ENCODE measurements at regions of chr12 and their contacts with region 1.

Region 1: GRCh38 chr12:108514973-108515814 is at the start of gene FICD:
- DNase-seq: peak; percentile 96
- H3K4me3 ChIP-seq: peak within 1 kb of the TSS; percentile 68 to 92
- H3K27ac ChIP-seq: peak within 1 kb of the TSS; percentile 40 to 41; a peak in 2 of 4 replicates
- H3K4me1 ChIP-seq: peaks cover 5 to 17% of the 10 kb centered on the region in 2 experiments; a peak in 1 of 4 replicates
- H3K27me3 ChIP-seq: no peaks in the 10 kb centered on the region
- CTCF ChIP-seq: no peak
- EP300 ChIP-seq: no peak
- RAD21 ChIP-seq: no peak
- polyA plus RNA-seq, gene FICD: 1.0 and 1.2 TPM in 2 replicates

Region 2: GRCh38 chr12:108129017-108129812 is 386.0 kb before region 1 on chr12 and contains the start of gene WSCD2:
- CTCF ChIA-PET with region 1: interaction called, 11 read pairs
- POLR2A ChIA-PET with region 1: no interaction called
- DNase-seq: peak; percentile 90
- H3K4me3 ChIP-seq: peak within 1 kb of the TSS in 1 of 2 experiments; percentile 48; a peak in 3 of 4 replicates
- H3K27ac ChIP-seq: peak within 1 kb of the TSS in 1 of 2 experiments; percentile 69; a peak in 2 of 4 replicates
- H3K4me1 ChIP-seq: peaks cover 0 to 26% of the 10 kb centered on the region in 2 experiments; a peak in 1 of 4 replicates
- H3K27me3 ChIP-seq: no peaks in the 10 kb centered on the region
- CTCF ChIP-seq: no peak
- EP300 ChIP-seq: no peak
- RAD21 ChIP-seq: peak; percentile 53
- polyA plus RNA-seq, gene WSCD2: 0.03 and 0.05 TPM in 2 replicates

Region 3: GRCh38 chr12:108234158-108234557 is 281.0 kb before region 1 on chr12:
- CTCF ChIA-PET with region 1: interaction called, 45 read pairs
- POLR2A ChIA-PET with region 1: no interaction called
- DNase-seq: peak; percentile 58
- H3K4me3 ChIP-seq: no peak overlapping the region
- H3K27ac ChIP-seq: no peak overlapping the region
- H3K4me1 ChIP-seq: peaks cover 0 to 22% of the 10 kb centered on the region in 2 experiments; a peak in 2 of 4 replicates
- H3K27me3 ChIP-seq: no peaks in the 10 kb centered on the region
- CTCF ChIP-seq: no peak
- EP300 ChIP-seq: no peak
- RAD21 ChIP-seq: peak; percentile 79

Region 4: DNA sequence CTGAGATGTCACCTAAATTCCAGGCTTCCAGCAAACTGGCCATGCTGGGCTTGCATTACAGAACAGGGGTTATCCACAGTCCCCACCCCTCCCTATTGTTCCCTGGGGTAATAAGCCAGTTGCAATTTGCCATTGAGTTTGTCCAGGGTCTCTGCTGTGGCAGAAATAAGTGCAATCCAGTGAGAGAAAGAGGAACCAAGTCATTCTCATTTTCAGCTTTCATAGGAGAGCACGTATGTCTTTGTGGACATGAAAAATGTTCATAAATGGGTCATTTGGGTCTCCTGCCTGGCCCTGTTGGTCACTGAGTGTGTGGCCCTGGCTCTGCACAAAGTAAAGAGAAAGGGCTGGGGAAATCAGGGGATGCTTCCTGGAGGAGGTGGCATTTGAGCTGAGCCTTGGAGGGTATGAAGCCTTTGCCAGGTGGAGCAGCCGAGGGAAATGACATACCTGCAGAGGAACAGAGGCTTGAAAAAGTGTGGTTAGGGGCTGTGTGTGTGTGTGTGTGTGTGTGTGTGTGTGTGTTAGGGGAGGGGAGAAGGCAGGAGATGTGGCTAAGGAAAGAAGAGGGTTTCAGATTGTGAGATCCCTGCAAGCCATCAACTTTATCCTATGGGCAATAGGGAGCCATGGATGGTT is 205.4 kb before region 1 on chr12:
- CTCF ChIA-PET with region 1: no interaction called
- POLR2A ChIA-PET with region 1: no interaction called
- DNase-seq: no peak
- H3K4me3 ChIP-seq: no peak overlapping the region
- H3K27ac ChIP-seq: peak overlapping the region in 1 of 2 experiments; percentile 97; a peak in 1 of 4 replicates
- H3K4me1 ChIP-seq: peaks cover 0 to 86% of the 10 kb centered on the region in 2 experiments; a peak in 2 of 4 replicates
- H3K27me3 ChIP-seq: no peaks in the 10 kb centered on the region
- CTCF ChIP-seq: no peak
- EP300 ChIP-seq: no peak
- RAD21 ChIP-seq: no peak

Region 5: DNA sequence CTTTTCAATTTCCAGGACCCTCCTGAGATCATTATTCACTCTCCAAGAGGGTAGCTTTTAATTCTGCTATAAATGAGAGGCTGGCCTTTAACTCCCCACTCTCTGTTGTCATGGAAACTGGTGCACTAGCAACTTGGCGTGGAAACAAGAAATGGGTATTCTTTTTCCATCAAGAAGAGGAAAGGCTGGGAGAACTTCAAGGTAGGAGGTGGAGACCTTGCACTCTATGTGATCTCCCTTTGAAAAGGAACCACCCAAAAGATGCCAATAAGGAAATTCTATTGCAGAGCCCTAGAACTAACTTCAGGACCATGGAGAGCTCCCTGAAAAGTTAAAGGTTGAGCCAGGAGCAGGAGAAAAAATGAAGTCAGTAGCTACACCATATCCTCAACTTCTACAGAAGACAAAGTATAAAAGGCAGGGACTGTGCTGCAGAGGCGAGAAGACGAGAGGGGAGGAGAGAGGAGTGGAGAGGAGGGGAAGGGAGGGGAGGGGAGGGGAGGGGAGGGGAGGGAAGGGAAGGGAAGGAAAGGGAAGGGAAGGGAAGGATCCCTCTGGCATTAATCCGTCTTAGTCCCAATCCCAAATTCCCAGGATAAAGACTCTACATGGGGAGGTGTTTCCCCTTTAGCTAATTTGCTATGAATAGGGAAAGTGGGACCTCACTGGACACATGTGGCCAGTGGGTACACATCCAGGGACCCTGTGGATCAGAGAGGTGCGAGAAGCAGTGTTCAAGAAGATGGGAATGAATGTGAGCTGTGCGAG is 46.8 kb before region 1 on chr12:
- CTCF ChIA-PET with region 1: interaction called, 13 read pairs
- POLR2A ChIA-PET with region 1: no interaction called
- DNase-seq: no peak
- H3K4me3 ChIP-seq: no peak overlapping the region
- H3K27ac ChIP-seq: no peak overlapping the region
- H3K4me1 ChIP-seq: peaks cover 0 to 2% of the 10 kb centered on the region in 2 experiments; a peak in 1 of 4 replicates
- H3K27me3 ChIP-seq: no peaks in the 10 kb centered on the region
- CTCF ChIP-seq: no peak
- EP300 ChIP-seq: no peak
- RAD21 ChIP-seq: no peak

Region 6: GRCh38 chr12:108495054-108495453 is 20.1 kb before region 1 on chr12:
- CTCF ChIA-PET with region 1: interaction called, 33 read pairs
- POLR2A ChIA-PET with region 1: no interaction called
- DNase-seq: peak; percentile 59
- H3K4me3 ChIP-seq: no peak overlapping the region; a peak in 1 of 4 replicates
- H3K27ac ChIP-seq: peak overlapping the region in 1 of 2 experiments; percentile 60; a peak in 1 of 4 replicates
- H3K4me1 ChIP-seq: peaks cover 0 to 14% of the 10 kb centered on the region in 2 experiments; a peak in 1 of 4 replicates
- H3K27me3 ChIP-seq: no peaks in the 10 kb centered on the region
- CTCF ChIP-seq: peak; percentile 65
- EP300 ChIP-seq: no peak
- RAD21 ChIP-seq: peak; percentile 62

Region 7: GRCh38 chr12:108664338-108665258 is 149.4 kb after region 1 on chr12:
- CTCF ChIA-PET with region 1: no interaction called
- POLR2A ChIA-PET with region 1: no interaction called
- DNase-seq: peak; percentile 78
- H3K4me3 ChIP-seq: no peak overlapping the region; a peak in 1 of 4 replicates
- H3K27ac ChIP-seq: peak overlapping the region; percentile 84 to 91
- H3K4me1 ChIP-seq: peaks cover 46 to 61% of the 10 kb centered on the region in 2 experiments
- H3K27me3 ChIP-seq: no peaks in the 10 kb centered on the region
- CTCF ChIP-seq: peak; percentile 93
- EP300 ChIP-seq: peak in 1 of 2 experiments; percentile 18; a peak in 1 of 4 replicates
- RAD21 ChIP-seq: peak; percentile 100

Measured in SK-N-SH (cell line).